ENCODE measurements at regions of chr1 and their contacts with region 1.

Region 1: DNA sequence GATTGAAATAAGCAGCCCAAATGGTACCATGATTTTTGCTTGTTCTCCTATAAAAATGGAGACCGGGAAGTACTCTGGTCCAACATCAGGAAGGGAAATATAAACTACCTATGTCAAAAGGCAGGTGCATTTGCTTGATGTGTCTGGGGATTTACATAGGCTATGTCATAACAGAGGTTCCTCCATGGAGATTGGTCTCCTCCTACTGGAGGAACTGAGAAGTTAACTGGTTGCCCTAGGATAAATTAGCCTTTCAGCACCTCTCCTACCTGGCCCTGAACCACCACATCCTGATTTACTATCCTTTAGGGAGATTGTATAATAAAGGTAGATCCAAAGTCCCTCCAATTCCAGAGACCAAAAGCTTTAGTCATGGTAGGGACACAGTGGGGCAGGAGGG is 1109.3 kb upstream of the B3GALT2 start:
- DNase-seq: peak; percentile 57
- ATAC-seq: peak; percentile 87
- H3K4me3 ChIP-seq: no peak overlapping the region
- H3K27ac ChIP-seq: no peak overlapping the region
- H3K4me1 ChIP-seq: no peaks in the 10 kb centered on the region
- H3K27me3 ChIP-seq: no peaks in the 10 kb centered on the region
- CTCF ChIP-seq: peak; percentile 58

Region 2: DNA sequence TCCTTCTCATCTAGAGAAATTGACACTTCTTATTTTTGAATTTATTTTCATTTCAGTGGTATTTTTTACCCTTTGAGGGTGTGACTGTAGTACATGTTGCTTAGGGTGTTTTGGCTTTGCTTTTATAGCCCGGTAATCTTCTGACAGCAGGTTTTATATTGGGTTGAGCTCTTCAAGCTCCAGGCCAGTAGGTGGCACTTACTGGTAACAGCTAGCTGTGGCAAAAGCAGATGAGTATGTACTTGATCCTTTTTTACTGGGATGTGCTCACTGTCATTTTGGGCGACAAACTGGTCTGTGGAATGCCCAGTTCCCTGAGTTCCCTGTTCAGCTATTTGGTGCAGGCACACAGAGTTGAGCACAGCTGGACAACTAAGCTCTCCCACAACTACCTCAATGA is 193.1 kb before region 1 on chr1:
- CTCF ChIA-PET with region 1: no interaction called
- POLR2A ChIA-PET with region 1: no interaction called
- intact Hi-C with region 1: loop called (anchors 5 kb)
- DNase-seq: peak; percentile 14
- ATAC-seq: peak; percentile 45; the same call in 1 of the 2 replicates
- H3K4me3 ChIP-seq: no peak overlapping the region
- H3K27ac ChIP-seq: no peak overlapping the region
- H3K4me1 ChIP-seq: no peaks in the 10 kb centered on the region
- H3K27me3 ChIP-seq: no peaks in the 10 kb centered on the region
- CTCF ChIP-seq: peak; percentile 50

Region 3: GRCh38 chr1:194159940-194160339 is 135.7 kb before region 1 on chr1:
- CTCF ChIA-PET with region 1: no interaction called
- POLR2A ChIA-PET with region 1: no interaction called
- intact Hi-C with region 1: loop called (anchors 5 kb)
- DNase-seq: peak; percentile 17
- ATAC-seq: peak; percentile 37; the same call in 1 of the 2 replicates
- H3K4me3 ChIP-seq: no peak overlapping the region
- H3K27ac ChIP-seq: no peak overlapping the region
- H3K4me1 ChIP-seq: no peaks in the 10 kb centered on the region
- H3K27me3 ChIP-seq: no peaks in the 10 kb centered on the region
- CTCF ChIP-seq: peak; percentile 45; the same call in 1 of the 2 replicates

Region 4: DNA sequence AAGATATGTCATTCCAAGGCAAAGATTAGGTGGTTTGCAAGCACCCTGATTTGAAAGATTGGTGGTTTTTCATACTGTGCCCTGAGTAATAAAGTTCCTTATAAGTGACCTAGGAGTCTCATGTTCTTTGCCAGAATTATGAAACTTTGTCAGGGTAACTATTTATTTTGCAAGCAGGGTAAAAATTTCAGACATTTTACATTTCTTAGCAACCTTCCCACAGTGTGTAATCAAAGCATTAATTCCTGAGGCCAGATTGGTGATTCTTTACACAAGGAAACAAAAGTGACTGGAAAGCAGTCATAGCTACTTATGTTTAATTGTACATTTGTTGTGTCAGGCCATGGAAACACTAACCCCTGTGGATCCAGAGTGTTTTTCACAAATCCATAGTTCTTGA is 111.3 kb before region 1 on chr1:
- CTCF ChIA-PET with region 1: no interaction called
- POLR2A ChIA-PET with region 1: no interaction called
- intact Hi-C with region 1: loop called (anchors 5 kb)
- DNase-seq: no peak
- ATAC-seq: no peak
- H3K4me3 ChIP-seq: no peak overlapping the region
- H3K27ac ChIP-seq: no peak overlapping the region
- H3K4me1 ChIP-seq: no peaks in the 10 kb centered on the region
- H3K27me3 ChIP-seq: no peaks in the 10 kb centered on the region
- CTCF ChIP-seq: no peak

Region 5: GRCh38 chr1:194466706-194467105 is 171.0 kb after region 1 on chr1:
- CTCF ChIA-PET with region 1: no interaction called
- POLR2A ChIA-PET with region 1: no interaction called
- intact Hi-C with region 1: loop called (anchors 10 kb)
- DNase-seq: peak; percentile 22
- ATAC-seq: peak; percentile 53; the same call in 1 of the 2 replicates
- H3K4me3 ChIP-seq: no peak overlapping the region
- H3K27ac ChIP-seq: no peak overlapping the region
- H3K4me1 ChIP-seq: no peaks in the 10 kb centered on the region
- H3K27me3 ChIP-seq: no peaks in the 10 kb centered on the region
- CTCF ChIP-seq: peak; percentile 53

Measured in PC-3 (cell line).